Panc1 (cell line): ENCODE measurements at regions of chr22 and their contacts with region 1.

Region 1: GRCh38 chr22:20904008-20904979 is 12.9 kb upstream of the CRKL start:
- DNase-seq: peak; percentile 83
- ATAC-seq: no peak
- H3K4me3 ChIP-seq: no peak overlapping the region
- H3K27ac ChIP-seq: no peak overlapping the region
- H3K4me1 ChIP-seq: no peaks in the 10 kb centered on the region
- H3K27me3 ChIP-seq: no peaks in the 10 kb centered on the region
- CTCF ChIP-seq: no peak

Region 2: DNA sequence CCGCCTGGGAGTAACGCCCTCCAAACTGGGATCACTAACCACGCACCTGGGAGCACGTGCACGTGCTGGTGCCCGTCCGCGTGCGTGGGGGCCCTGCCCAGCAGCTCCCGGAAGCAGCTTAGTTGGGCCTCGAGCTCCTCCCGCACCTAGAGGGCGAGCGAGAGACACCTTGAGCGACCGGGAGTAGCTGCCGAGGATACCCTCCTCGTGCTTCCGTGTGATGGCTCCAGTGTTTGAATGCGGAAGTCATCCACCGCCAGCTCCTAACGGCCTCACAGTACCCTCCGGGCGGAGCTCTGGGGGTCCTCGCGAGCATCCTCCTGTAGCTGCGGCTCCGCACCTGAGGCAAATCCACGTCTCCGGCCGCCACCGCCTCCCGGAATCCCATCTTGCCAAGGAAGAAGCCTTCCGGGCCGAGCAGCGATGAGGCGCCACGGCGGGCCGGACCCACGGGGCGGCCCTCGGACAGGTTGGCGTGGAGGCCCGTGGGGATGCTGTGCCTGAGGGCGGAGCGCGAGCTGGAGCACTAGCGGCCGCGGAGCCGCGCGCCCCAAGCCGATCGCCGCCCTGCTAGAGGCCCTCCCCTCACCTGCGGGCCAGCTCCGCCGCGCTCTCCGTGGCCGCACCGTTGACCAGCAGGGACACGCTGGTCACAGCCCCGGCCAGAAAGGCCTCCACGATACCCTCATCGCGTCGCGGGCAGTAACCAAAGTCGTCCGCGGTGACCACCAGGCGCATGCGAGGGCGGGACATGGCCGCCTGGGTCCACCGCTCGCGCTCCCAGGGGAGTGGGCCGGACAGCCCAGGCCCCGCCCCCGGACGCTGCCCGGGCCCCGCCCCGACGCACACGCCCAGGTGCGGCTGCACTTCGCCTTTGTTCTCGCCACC is 725.2 kb after region 1 on chr22 and contains the start of gene YDJC:
- CTCF ChIA-PET with region 1: interaction called, 10 read pairs
- POLR2A ChIA-PET with region 1: no interaction called
- in situ Hi-C with region 1: no loop called
- intact Hi-C with region 1: no loop called
- DNase-seq: peak; percentile 68
- ATAC-seq: peak; percentile 92
- H3K4me3 ChIP-seq: peak within 1 kb of the TSS; percentile 65 to 86
- H3K27ac ChIP-seq: peak within 1 kb of the TSS; percentile 88
- H3K4me1 ChIP-seq: peaks cover 15% of the 10 kb centered on the region
- H3K27me3 ChIP-seq: no peaks in the 10 kb centered on the region
- CTCF ChIP-seq: no peak; the same call in 1 of the 2 replicates
- total RNA-seq, gene YDJC: 60.6 TPM